ENCODE measurements at regions of chr3 and their contacts with region 1.

Region 1: GRCh38 chr3:23945903-23946751 is 1.0 kb downstream of the NR1D2 start:
- DNase-seq: peak; percentile 98
- H3K4me3 ChIP-seq: peak overlapping the region; percentile 66
- H3K27ac ChIP-seq: peak overlapping the region; percentile 87
- H3K4me1 ChIP-seq: peaks cover 7% of the 10 kb centered on the region
- H3K27me3 ChIP-seq: no peaks in the 10 kb centered on the region
- CTCF ChIP-seq: no peak

Region 2: GRCh38 chr3:23776352-23776891 is 169.7 kb before region 1 on chr3:
- CTCF ChIA-PET with region 1: no interaction called
- POLR2A ChIA-PET with region 1: no interaction called
- intact Hi-C with region 1: no loop called
- DNase-seq: peak; percentile 26
- H3K4me3 ChIP-seq: no peak overlapping the region
- H3K27ac ChIP-seq: no peak overlapping the region
- H3K4me1 ChIP-seq: no peaks in the 10 kb centered on the region
- H3K27me3 ChIP-seq: no peaks in the 10 kb centered on the region
- CTCF ChIP-seq: no peak

Region 3: DNA sequence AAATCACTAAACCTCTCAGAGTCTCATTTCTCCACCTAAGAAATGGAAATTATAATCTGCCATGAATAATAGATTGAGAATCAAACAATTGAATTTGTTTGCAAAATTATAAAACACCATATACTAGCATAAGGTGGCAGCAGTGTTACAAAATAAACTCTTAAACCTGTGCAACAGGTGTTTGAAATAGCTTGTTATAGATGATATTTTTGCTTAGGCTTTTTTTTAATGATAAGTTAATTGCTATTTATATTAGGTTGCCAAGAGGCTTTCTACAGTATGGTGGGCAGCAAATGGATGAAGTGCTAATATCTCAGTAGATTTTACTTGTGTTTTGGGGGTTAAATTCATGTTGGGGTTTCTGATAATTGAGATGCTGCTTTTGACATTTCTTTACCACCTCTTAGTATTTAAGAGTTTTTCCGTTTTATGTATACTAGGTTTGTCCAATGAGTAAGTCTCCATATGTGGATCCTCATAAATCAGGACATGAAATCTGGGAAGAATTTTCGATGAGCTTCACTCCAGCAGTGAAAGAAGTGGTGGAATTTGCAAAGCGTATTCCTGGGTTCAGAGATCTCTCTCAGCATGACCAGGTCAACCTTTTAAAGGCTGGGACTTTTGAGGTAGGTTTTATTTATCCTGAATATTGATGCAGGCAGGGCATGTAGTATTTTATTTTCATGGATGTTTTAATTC is 18.6 kb after region 1 on chr3:
- CTCF ChIA-PET with region 1: interaction called, 10 read pairs
- POLR2A ChIA-PET with region 1: interaction called, 9 read pairs
- intact Hi-C with region 1: no loop called
- DNase-seq: no peak
- H3K4me3 ChIP-seq: no peak overlapping the region
- H3K27ac ChIP-seq: no peak overlapping the region
- H3K4me1 ChIP-seq: no peaks in the 10 kb centered on the region
- H3K27me3 ChIP-seq: no peaks in the 10 kb centered on the region
- CTCF ChIP-seq: no peak